ENCODE measurements at regions of chr12 and their contacts with region 1.

Region 1: GRCh38 chr12:105084251-105085250 is at the start of gene ALDH1L2:
- DNase-seq: peak; percentile 95
- H3K4me3 ChIP-seq: peak within 1 kb of the TSS; percentile 51 to 76
- H3K27ac ChIP-seq: peak within 1 kb of the TSS in 1 of 2 experiments; percentile 0; a peak in 2 of 4 replicates
- H3K4me1 ChIP-seq: peaks cover 0 to 11% of the 10 kb centered on the region in 2 experiments; a peak in 1 of 4 replicates
- H3K27me3 ChIP-seq: no peaks in the 10 kb centered on the region
- CTCF ChIP-seq: no peak
- EP300 ChIP-seq: no peak
- RAD21 ChIP-seq: no peak
- polyA plus RNA-seq, gene ALDH1L2: 1.9 and 3.4 TPM in 2 replicates

Region 2: DNA sequence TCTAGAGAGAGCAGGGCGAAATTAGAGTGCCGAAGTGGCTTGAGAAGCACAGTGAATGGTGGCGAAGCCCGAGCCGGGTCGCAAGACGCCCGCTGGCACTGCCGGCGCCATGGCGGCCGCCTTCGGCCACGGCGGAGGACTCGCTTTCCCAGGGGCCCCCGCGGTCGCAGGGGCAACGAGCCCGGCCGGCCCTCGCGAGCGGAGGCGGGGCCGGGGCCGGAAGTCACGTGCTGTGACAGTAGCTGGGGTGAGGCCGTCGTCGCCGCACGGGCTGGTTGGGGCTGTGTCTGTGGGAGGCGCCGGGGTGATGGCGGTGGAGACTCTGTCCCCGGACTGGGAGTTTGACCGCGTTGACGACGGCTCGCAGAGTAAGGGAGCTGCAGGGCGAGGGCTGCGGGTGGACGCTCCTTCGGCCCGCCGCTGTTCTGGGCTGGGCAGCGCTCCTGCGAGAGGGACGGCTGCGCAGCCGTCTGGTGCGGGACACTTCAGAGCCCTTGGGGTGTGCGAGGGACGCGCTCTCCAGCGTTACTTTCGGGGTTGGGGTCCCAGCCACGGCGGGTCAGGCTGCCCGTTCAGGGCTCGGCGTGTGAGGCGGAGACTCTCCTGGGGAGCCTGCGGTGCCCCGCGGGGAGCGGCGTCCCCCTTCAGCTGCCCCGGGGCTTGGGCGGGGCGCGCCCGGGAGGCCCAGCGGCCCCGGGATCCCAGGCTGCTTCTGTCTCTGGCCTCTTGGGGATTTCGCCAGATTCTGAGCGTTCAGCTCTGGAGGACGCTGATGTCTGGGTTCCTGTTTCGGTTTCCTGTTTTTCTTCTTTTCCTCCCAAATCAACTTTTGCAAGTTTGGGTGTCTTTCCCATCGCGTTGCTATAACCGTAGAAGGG is 23.2 kb after region 1 on chr12 and contains the start of gene WASHC4:
- CTCF ChIA-PET with region 1: interaction called, 3 read pairs
- POLR2A ChIA-PET with region 1: interaction called, 13 read pairs
- DNase-seq: peak; percentile 99
- H3K4me3 ChIP-seq: peak within 1 kb of the TSS; percentile 83 to 99
- H3K27ac ChIP-seq: peak within 1 kb of the TSS; percentile 91 to 96
- H3K4me1 ChIP-seq: peaks cover 6 to 16% of the 10 kb centered on the region in 2 experiments; a peak in 3 of 4 replicates
- H3K27me3 ChIP-seq: no peaks in the 10 kb centered on the region
- CTCF ChIP-seq: 0 out of 2 replicates have a peak, but pooled peaks have one; percentile 6
- EP300 ChIP-seq: no peak
- RAD21 ChIP-seq: no peak
- polyA plus RNA-seq, gene WASHC4: 11.2 and 15.9 TPM in 2 replicates

Measured in SK-N-SH (cell line).